Naive thymus-derived CD8-positive, alpha-beta T cell (primary cell): ENCODE measurements at regions of chr18 and their contacts with region 1.

Region 1: DNA sequence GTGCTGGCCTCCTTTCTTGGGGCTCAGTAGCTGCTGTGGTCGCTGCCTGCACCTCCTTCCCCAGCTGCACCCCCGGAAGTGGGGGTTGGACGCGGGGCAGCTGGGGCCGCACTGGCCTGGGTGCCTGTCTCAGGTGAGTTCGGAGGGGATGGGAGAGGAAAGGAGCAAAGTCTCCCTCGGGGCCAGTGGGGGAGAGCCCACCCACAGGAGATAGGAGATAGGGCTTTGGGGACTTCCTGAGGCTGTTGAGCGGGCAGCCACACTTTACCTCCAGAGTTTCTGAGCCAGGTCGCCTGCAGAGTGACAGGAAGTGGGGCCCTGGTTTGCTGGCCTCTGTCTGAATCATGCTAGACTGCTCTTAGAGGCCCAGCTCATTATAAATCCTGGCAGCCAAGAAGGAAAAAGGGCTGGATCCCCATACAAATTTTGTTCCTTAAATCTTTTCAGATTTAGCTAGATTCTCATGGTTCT is 8.1 kb downstream of the MBP start:
- DNase-seq: peak in 6 of 10 donors; percentile 32 to 56 (median 42)
- ATAC-seq: peak; percentile 67 to 85
- H3K4me3 Mint-ChIP-seq: peak overlapping the region; percentile 64 to 84 (median 78)
- H3K27ac Mint-ChIP-seq: peak overlapping the region; percentile 30 to 98 (median 86)
- H3K4me1 Mint-ChIP-seq: peaks cover 48 to 93% (median 91%) of the 10 kb centered on the region in 4 donors
- H3K27me3 Mint-ChIP-seq: no peaks in the 10 kb centered on the region

Region 2: GRCh38 chr18:77108001-77108692 is 16.3 kb before region 1 on chr18:
- POLR2A ChIA-PET with region 1: interaction called, 16 read pairs
- DNase-seq: no peak
- ATAC-seq: no peak
- H3K4me3 Mint-ChIP-seq: peak overlapping the region; percentile 26 to 75 (median 72)
- H3K27ac Mint-ChIP-seq: peak overlapping the region; percentile 66 to 99 (median 96)
- H3K4me1 Mint-ChIP-seq: peaks cover 62 to 97% (median 94%) of the 10 kb centered on the region in 4 donors
- H3K27me3 Mint-ChIP-seq: no peaks in the 10 kb centered on the region